PC-3 (cell line): ENCODE measurements at regions of chr7 and their contacts with region 1.

Region 1: GRCh38 chr7:110442381-110442837 is 648.5 kb upstream of the LRRN3 start:
- DNase-seq: peak; percentile 61
- ATAC-seq: peak; percentile 99
- H3K4me3 ChIP-seq: no peak overlapping the region
- H3K27ac ChIP-seq: no peak overlapping the region
- H3K4me1 ChIP-seq: no peaks in the 10 kb centered on the region
- H3K27me3 ChIP-seq: no peaks in the 10 kb centered on the region
- CTCF ChIP-seq: peak; percentile 77

Region 2: GRCh38 chr7:110003827-110004226 is 438.6 kb before region 1 on chr7:
- CTCF ChIA-PET with region 1: no interaction called
- POLR2A ChIA-PET with region 1: no interaction called
- intact Hi-C with region 1: loop called (anchors 10 kb)
- DNase-seq: no peak
- ATAC-seq: peak; percentile 83
- H3K4me3 ChIP-seq: no peak overlapping the region
- H3K27ac ChIP-seq: no peak overlapping the region
- H3K4me1 ChIP-seq: no peaks in the 10 kb centered on the region
- H3K27me3 ChIP-seq: no peaks in the 10 kb centered on the region
- CTCF ChIP-seq: peak; percentile 32; the same call in 1 of the 2 replicates

Region 3: DNA sequence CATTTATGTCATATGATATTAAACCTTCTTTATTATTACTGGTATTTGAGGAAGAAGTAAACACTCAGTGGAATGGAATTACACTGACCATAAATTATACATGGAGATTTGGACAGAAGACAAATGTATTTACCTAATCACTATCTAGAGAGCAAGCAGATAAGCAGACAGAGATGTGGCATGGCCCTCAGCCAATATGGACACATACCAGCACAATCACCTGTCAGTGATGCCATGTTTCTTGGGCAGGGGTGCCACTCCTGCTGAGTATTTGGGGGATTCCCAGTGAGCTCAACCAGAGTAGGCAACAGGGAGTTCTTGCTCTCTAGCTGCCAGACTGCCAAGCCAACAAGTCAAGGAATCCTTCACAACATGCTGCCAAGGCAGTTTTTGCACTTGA is 217.8 kb before region 1 on chr7:
- CTCF ChIA-PET with region 1: no interaction called
- POLR2A ChIA-PET with region 1: no interaction called
- intact Hi-C with region 1: loop called (anchors 10 kb)
- DNase-seq: peak; percentile 18
- ATAC-seq: peak; percentile 45
- H3K4me3 ChIP-seq: no peak overlapping the region
- H3K27ac ChIP-seq: no peak overlapping the region
- H3K4me1 ChIP-seq: no peaks in the 10 kb centered on the region
- H3K27me3 ChIP-seq: no peaks in the 10 kb centered on the region
- CTCF ChIP-seq: no peak

Region 4: GRCh38 chr7:110418659-110419280 is 23.6 kb before region 1 on chr7:
- CTCF ChIA-PET with region 1: no interaction called
- POLR2A ChIA-PET with region 1: no interaction called
- intact Hi-C with region 1: no loop called
- DNase-seq: no peak
- ATAC-seq: no peak
- H3K4me3 ChIP-seq: no peak overlapping the region
- H3K27ac ChIP-seq: no peak overlapping the region
- H3K4me1 ChIP-seq: no peaks in the 10 kb centered on the region
- H3K27me3 ChIP-seq: no peaks in the 10 kb centered on the region
- CTCF ChIP-seq: no peak